Activated naive CD4-positive, alpha-beta T cell treated with anti-CD3 and anti-CD28 coated beads for 36 hours (primary cell): ENCODE measurements at regions of chr7 and their contacts with region 1.

Region 1: DNA sequence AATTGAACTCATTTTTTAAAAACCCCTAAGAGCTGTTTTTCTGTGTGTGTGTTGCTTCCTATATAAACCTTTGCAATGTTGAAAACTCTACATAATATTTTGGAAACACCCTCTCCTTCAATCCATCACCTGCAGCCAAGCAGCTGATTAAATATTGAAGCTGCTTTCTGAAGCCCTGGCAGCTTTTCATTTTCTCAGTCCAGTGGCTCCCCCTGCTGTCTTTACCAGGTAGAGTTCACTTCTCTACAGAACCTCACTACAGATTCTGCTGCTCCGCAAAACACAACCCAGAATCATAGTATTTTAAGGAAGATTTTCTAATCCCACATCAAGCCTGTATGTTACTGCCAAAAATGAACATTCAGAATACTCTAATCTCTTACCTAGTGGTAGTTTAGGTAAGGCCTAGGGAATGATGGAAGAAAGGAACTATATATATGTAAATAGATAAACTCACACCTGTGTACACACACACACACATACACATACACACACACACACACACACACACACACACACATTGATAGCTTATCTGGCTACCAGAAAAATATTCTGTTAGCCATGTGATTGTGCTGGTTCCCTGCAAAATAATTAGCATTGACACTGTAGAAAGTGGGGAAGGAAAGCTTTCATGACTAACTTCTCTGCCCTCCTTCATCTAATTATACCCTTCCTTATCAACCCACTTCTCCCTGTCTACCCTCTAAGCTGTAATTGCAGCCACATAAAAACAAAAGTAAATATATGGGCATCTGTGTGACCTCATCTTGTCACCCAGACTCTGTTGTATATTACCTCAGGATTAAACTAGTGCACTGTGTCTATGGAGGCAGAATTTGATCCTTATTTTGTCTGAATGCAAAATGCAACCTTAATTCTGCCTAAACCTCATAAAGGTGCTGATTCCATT is 229.5 kb upstream of the FZD1 start:
- DNase-seq: peak; percentile 58
- H3K4me3 Mint-ChIP-seq: no peak overlapping the region
- H3K27ac Mint-ChIP-seq: no peak overlapping the region
- H3K4me1 Mint-ChIP-seq: no peaks in the 10 kb centered on the region
- H3K27me3 Mint-ChIP-seq: peaks cover 3% of the 10 kb centered on the region

Region 2: DNA sequence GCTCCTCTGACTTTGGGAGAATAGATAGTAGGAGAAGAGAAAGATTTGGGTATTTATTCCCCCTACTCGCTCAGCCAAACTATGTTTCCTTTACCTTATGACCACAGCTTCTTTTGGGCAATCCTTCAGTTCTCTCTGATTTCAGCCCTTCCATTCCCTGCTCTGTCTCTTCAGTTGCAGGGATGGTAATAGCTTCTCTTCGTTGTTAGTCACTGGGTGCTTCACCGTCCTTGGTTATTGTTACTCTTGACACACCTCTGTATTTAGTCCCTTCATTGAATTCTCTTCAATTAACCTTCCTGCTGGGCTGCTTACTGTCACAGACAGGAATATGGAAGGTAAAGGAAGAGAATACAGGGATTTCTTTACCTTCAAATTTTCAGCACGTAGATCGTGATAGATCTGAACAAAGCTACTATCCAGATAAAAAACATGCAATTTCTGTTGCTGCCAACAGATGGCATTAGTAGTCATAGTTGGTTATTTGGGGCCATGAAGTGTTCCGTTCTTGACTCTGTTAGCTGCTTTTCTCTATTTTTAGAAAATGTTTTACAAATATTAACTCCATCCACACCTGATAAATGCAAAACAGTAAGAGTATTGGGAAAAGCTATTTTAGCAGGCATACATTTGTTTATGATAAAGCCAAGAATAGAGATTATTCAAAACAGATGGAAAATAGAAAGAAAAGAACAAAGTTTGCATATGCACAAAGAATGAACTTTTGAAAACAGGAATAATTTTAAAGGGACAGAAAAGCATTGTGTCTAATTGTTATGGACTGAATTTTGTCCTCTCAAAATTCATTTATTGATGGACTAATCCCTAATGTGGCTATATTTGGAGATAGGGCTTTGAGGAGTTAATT is 579.3 kb before region 1 on chr7:
- CTCF ChIA-PET with region 1: interaction called, 6 read pairs
- intact Hi-C with region 1: loop called (anchors 1 kb)
- DNase-seq: no peak
- H3K4me3 Mint-ChIP-seq: no peak overlapping the region
- H3K27ac Mint-ChIP-seq: no peak overlapping the region
- H3K4me1 Mint-ChIP-seq: peaks cover 5% of the 10 kb centered on the region
- H3K27me3 Mint-ChIP-seq: peaks cover 3% of the 10 kb centered on the region

Region 3: DNA sequence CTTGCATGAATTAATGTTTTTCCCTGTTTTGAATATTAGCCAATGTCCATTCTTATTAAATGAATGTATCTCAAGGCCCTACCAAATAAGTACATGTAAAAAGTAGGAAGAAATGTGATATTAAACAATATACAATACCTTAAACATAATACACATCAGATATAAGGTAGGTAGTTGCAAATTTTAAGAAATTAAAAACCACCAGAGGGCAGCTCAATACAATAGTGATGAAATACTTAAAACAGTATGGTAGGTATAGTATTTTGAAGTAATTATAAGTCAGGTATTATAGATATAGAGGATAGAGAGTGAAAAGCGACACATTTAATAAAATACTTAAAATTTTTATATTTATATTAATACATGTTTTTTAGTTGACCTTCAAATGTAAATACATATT is 482.2 kb before region 1 on chr7:
- CTCF ChIA-PET with region 1: no interaction called
- intact Hi-C with region 1: loop called (anchors 10 kb)
- DNase-seq: no peak
- H3K4me3 Mint-ChIP-seq: no peak overlapping the region
- H3K27ac Mint-ChIP-seq: no peak overlapping the region
- H3K4me1 Mint-ChIP-seq: no peaks in the 10 kb centered on the region
- H3K27me3 Mint-ChIP-seq: peaks cover 26% of the 10 kb centered on the region

Region 4: GRCh38 chr7:90629297-90629918 is 405.3 kb before region 1 on chr7:
- CTCF ChIA-PET with region 1: no interaction called
- intact Hi-C with region 1: loop called (anchors 2 kb)
- DNase-seq: peak; percentile 12
- H3K4me3 Mint-ChIP-seq: no peak overlapping the region
- H3K27ac Mint-ChIP-seq: no peak overlapping the region
- H3K4me1 Mint-ChIP-seq: no peaks in the 10 kb centered on the region
- H3K27me3 Mint-ChIP-seq: peaks cover 4% of the 10 kb centered on the region

Region 5: DNA sequence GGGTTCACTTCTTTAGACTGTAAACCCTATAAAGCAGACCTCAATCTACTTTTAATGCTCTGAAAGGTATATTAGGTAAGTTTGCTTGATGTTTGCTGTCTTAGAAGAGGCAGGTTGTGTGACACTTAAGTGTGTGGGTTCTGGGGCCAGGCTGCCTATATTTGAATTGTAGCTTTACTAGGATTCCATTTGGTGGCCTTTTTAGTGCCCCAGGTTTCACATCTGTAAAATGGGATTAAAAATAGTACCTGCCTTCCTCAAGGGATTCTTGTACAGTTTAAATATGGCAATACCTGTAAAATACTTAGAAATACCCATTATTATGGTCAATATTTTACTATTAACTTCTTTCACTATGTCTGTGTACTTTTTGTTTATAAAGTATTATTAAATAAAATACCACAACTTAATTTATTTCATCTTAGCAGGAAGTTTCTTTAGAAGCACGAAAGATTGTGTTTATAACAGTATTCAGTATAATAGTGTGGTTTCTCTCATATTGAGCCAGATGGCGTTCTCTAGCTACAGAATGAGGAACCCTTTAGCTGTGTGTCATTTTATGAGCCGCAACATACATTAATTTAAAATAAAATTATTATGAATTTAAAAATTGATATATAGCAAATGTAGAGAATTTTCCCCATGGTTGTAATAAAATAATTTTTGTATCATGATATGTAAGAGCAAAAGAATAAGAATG is 344.4 kb before region 1 on chr7:
- CTCF ChIA-PET with region 1: no interaction called
- intact Hi-C with region 1: loop called (anchors 1 kb)
- DNase-seq: no peak
- H3K4me3 Mint-ChIP-seq: no peak overlapping the region
- H3K27ac Mint-ChIP-seq: no peak overlapping the region
- H3K4me1 Mint-ChIP-seq: no peaks in the 10 kb centered on the region
- H3K27me3 Mint-ChIP-seq: no peaks in the 10 kb centered on the region

Region 6: GRCh38 chr7:90708841-90709317 is 325.8 kb before region 1 on chr7:
- CTCF ChIA-PET with region 1: no interaction called
- intact Hi-C with region 1: loop called (anchors 1 kb)
- DNase-seq: peak; percentile 27
- H3K4me3 Mint-ChIP-seq: no peak overlapping the region
- H3K27ac Mint-ChIP-seq: no peak overlapping the region
- H3K4me1 Mint-ChIP-seq: no peaks in the 10 kb centered on the region
- H3K27me3 Mint-ChIP-seq: peaks cover 5% of the 10 kb centered on the region

Region 7: DNA sequence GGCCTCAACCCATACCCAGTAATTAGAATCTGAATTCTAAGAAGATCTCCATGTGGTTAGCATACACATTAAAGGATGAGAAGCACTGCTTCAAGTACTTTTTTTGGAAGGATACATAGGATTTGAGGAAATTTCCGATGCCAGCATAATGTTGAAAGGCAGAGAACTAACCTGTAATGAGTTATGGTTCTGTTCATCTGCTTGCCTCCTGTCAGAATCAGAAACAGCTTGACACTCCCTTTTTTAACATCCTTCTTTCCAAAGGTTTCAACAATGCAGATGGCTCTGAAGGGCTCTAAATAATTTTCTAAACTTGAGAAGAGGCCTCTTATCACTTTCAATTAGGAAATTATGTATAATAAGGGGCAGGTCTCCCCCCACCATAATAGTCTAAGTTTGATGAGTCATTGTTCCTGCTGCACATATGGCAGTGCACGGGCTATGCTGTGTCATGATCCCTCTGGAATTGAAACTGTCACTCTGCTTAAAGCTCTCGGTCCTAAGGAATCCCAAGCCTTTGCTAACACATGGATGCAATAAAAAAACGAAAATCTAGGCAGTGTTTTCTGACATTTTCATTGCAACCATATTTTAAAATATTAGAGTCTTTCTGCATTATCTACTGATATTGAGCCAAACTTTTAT is 61.7 kb before region 1 on chr7:
- CTCF ChIA-PET with region 1: no interaction called
- intact Hi-C with region 1: no loop called
- DNase-seq: no peak
- H3K4me3 Mint-ChIP-seq: no peak overlapping the region
- H3K27ac Mint-ChIP-seq: no peak overlapping the region
- H3K4me1 Mint-ChIP-seq: no peaks in the 10 kb centered on the region
- H3K27me3 Mint-ChIP-seq: no peaks in the 10 kb centered on the region